MCF 10A (cell line): ENCODE measurements at regions of chr12 and their contacts with region 1.

Region 1: DNA sequence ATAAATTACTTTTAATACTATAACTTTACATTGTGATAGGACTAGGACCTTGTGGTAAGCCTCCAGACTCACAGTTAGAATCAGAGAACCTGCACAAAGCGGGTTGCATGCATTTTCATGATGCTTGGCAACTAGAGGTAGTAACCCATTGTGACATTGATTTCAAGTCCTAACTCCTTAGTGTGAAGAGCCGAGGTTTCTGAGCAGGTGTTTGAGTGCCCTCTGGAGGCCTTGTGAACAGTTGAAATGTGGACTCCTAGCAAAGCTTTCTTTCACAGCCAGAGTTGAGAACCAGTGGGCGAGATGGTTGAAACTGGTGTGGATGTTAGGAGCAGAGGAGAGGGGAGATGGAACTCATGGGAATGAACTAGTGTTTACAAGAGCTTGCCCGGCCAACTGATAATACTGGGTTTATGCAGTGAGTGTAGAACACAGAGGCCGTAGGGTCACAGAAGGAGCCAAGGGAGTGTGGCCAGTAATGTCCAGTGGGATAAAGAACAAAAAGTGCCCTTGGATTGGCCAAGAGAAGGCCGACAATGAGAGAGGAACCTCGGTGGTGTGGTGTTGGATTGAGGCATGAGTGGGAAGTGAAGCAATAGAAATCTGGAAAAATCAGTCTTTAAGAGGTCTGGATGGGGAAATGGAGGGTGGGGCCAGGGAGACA is 10.9 kb downstream of the ZNF664 start:
- DNase-seq: peak; percentile 75
- H3K4me3 Mint-ChIP-seq: no peak overlapping the region
- H3K27ac Mint-ChIP-seq: no peak overlapping the region
- H3K4me1 Mint-ChIP-seq: peaks cover 7% of the 10 kb centered on the region
- H3K27me3 Mint-ChIP-seq: no peaks in the 10 kb centered on the region
- CTCF ChIP-seq: peak; percentile 69

Region 2: DNA sequence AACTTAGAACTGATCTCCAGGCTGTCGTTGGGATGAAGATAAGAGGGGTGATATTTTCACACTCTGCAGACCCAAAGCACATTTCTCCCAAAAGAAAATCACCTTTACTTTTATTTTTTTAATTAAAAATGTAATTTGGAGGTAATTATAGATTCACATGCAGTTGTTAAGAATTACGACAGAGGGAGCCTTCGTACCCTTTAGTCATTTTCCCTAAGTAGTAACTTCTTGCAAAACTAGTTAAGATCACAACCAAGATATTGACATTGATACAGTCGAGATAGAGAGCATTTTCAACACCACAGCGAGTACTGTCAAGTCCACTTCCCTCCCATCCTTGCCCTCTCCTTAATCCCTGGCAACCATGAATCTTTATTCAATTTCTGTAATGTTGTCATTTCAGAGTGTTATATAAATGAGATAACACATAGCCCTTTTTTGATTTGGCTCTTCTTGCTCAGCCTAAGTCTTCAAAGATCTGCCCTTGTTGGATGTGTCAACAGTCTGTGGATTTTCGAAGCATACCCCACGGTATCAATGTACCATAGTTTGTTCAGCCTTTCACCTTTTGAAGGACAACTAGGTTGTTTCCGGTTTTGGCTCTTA is 182.3 kb before region 1 on chr12:
- CTCF ChIA-PET with region 1: interaction called, 17 read pairs
- POLR2A ChIA-PET with region 1: interaction called, 3 read pairs
- intact Hi-C with region 1: loop called (anchors 1 kb)
- DNase-seq: peak; percentile 50
- H3K4me3 Mint-ChIP-seq: no peak overlapping the region
- H3K27ac Mint-ChIP-seq: no peak overlapping the region
- H3K4me1 Mint-ChIP-seq: peaks cover 5% of the 10 kb centered on the region
- H3K27me3 Mint-ChIP-seq: peaks cover 3% of the 10 kb centered on the region
- CTCF ChIP-seq: peak; percentile 62

Region 3: GRCh38 chr12:123808167-123808566 is 175.8 kb before region 1 on chr12:
- CTCF ChIA-PET with region 1: interaction called, 7 read pairs
- POLR2A ChIA-PET with region 1: no interaction called
- intact Hi-C with region 1: loop called (anchors 2 kb)
- DNase-seq: peak; percentile 28
- H3K4me3 Mint-ChIP-seq: no peak overlapping the region
- H3K27ac Mint-ChIP-seq: no peak overlapping the region
- H3K4me1 Mint-ChIP-seq: peaks cover 7% of the 10 kb centered on the region
- H3K27me3 Mint-ChIP-seq: peaks cover 32% of the 10 kb centered on the region
- CTCF ChIP-seq: peak; percentile 41

Region 4: GRCh38 chr12:123905319-123905925 is 78.5 kb before region 1 on chr12:
- CTCF ChIA-PET with region 1: interaction called, 6 read pairs
- POLR2A ChIA-PET with region 1: no interaction called
- intact Hi-C with region 1: loop called (anchors 1 kb)
- DNase-seq: peak; percentile 88
- H3K4me3 Mint-ChIP-seq: no peak overlapping the region
- H3K27ac Mint-ChIP-seq: no peak overlapping the region
- H3K4me1 Mint-ChIP-seq: peaks cover 9% of the 10 kb centered on the region
- H3K27me3 Mint-ChIP-seq: peaks cover 23% of the 10 kb centered on the region
- CTCF ChIP-seq: peak; percentile 77

Region 5: DNA sequence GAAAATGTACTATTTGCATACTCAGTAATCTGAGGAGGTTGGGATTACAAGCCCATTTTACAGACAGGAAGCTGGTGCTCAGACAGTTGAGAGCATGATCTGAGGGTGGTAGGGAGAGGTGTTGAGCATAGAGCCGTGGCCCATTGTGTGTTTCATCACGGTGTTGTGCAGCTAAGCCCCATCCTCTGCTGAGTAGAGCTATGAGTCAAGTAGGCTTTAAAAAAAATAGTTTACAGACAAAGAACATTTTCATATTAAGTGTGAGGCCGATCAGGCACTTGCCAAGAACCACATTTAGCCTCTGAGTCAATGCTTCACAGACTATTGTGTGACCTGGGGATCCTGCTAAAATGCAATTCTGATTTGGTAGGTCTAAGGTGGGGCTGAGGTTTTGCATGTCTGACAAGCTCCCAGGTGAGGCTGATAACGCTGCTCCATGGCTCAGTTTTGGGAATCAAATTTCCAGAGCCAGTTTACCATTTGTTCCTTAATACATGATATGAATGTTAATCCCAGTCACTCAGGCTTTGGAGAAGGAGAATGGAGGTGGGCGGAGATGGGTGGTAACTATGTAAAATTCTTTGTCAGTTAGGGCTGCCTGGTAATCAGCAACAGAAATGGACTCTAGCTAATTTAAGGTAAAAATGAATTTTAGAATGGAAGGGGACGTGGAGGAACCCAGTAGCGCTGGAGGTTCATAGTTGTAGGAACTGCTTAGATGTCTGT is 11.2 kb after region 1 on chr12:
- CTCF ChIA-PET with region 1: interaction called, 13 read pairs
- POLR2A ChIA-PET with region 1: no interaction called
- intact Hi-C with region 1: no loop called
- DNase-seq: peak; percentile 60
- H3K4me3 Mint-ChIP-seq: no peak overlapping the region
- H3K27ac Mint-ChIP-seq: peak overlapping the region; percentile 8
- H3K4me1 Mint-ChIP-seq: peaks cover 43% of the 10 kb centered on the region
- H3K27me3 Mint-ChIP-seq: no peaks in the 10 kb centered on the region
- CTCF ChIP-seq: no peak